ENCODE measurements at regions of chr2 and their contacts with region 1.

Region 1: DNA sequence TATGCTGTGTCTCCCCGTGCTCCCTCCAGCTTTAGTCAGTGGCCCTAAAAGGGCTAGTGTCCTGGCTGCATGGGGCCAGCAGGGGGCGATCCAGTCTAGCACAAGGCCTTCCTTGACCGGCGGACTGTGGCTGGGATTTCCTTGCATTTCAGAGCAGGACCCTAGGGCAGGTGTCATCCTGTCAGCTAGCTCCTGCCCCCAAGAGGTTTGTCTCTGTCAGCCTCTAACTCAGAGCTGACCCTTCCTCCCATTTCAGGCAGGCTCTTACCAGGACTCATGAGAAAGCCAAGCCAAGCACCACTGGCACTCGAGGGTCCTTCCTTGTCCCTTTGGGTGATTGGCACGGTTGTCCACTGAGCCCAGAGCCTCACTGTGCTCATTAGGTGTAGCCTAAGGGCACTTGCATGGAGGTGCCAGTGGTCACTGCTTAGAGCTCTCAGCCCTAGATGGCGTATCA is 140.3 kb downstream of the RPIA start:
- DNase-seq: peak; percentile 79 to 85 (median 80)
- ATAC-seq: peak; percentile 91
- H3K4me3 ChIP-seq: no peak overlapping the region
- H3K4me1 ChIP-seq: no peaks in the 10 kb centered on the region
- CTCF ChIP-seq: peak; percentile 87

Region 2: GRCh38 chr2:88739985-88740600 is 91.7 kb before region 1 on chr2:
- intact Hi-C with region 1: loop called in 1 of 2 experiments (anchors 10 kb)
- DNase-seq: peak in 2 of 3 donors; percentile 80 to 88
- ATAC-seq: peak; percentile 95
- H3K4me3 ChIP-seq: no peak overlapping the region
- H3K4me1 ChIP-seq: no peaks in the 10 kb centered on the region
- CTCF ChIP-seq: peak; percentile 87

Region 3: DNA sequence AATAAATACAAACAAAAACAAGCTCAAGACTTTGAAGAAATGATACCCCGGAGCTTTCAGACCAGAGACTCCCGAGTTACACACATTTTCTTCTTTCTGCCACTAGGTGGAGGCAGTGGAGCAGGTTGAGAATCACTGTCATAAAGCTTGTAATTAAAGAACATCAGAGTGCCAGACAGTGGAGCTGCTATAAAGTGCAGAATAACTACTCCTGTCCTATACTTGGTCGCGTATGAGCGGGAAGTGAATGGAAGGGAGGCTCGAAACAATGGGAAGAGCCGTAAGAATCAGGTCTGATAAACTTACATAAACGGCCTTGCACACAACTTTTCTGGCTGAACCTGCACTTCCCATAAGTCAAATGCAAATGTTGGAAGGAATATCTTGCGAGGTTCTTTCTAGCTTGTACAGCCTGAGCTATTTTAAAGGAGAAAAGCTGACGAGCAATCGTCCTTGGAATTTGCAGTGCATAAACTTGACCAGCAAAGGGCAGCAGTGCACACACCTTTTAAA is 48.7 kb after region 1 on chr2:
- intact Hi-C with region 1: loop called in 1 of 2 experiments (anchors 2 kb)
- DNase-seq: peak in 1 of 3 donors; percentile 71
- ATAC-seq: peak; percentile 89
- H3K4me3 ChIP-seq: no peak overlapping the region
- H3K4me1 ChIP-seq: no peaks in the 10 kb centered on the region
- CTCF ChIP-seq: peak; percentile 43